PC-9 (cell line): ENCODE measurements at regions of chr12 and their contacts with region 1.

Region 1: GRCh38 chr12:85468356-85469157 is 188.5 kb downstream of the ALX1 start:
- DNase-seq: peak; percentile 52 to 68
- H3K4me3 ChIP-seq: peak overlapping the region; percentile 43; the same call in 1 of the 2 replicates
- H3K27ac ChIP-seq: 0 out of 2 replicates have a peak overlapping the region, but pooled peaks have one; percentile 1
- H3K4me1 ChIP-seq: peaks cover 27% of the 10 kb centered on the region
- H3K27me3 ChIP-seq: no peaks in the 10 kb centered on the region
- CTCF ChIP-seq: peak; percentile 87

Region 2: DNA sequence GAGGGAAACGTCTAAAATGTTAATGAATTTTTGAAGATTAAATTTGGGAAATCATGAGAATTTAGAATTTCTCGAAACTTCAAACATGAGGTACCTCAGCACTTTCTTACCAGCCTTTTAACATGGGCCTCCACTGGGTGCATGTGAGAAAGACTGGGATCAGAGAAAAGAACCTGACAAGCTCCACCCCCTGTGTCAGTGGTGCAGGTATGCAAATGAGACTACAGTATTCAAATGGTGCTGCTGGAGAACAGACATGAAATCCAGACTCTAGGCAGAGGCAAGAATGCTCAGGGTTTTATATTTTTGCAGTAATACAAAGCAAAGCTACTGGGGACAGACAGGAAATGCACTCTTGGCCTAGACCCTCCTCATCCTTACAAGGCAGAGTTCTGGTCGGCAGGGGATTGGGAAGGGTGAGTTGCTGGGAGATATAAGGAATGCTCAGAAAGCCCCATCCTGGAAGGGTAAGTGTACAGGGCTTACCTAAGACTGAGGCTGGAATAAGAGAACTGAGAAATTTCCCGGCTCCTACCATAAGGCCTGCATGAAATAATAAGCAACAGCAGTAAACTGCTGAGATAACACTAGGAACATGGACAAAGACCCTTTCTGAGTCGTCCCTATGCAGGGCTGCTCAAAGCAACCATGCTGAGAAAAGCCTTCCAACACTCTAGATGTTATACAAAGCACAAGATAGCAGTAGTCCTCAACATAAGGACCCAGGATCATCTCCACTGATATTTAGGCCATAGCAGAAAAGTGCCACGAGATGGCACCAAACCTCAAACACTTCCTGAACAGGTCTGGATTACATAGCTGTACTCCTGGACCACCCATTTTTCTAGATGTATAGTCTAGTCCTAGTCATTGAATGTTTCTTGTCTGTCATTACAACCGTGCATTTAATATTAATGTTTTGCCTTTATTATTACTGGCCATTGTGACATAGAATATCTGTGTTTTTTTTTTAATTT is 106.9 kb after region 1 on chr12:
- CTCF ChIA-PET with region 1: no interaction called
- POLR2A ChIA-PET with region 1: no interaction called
- intact Hi-C with region 1: loop called (anchors 5 kb)
- DNase-seq: peak; percentile 33 to 40
- H3K4me3 ChIP-seq: no peak overlapping the region
- H3K27ac ChIP-seq: no peak overlapping the region
- H3K4me1 ChIP-seq: no peaks in the 10 kb centered on the region
- H3K27me3 ChIP-seq: no peaks in the 10 kb centered on the region
- CTCF ChIP-seq: peak; percentile 74

Region 3: DNA sequence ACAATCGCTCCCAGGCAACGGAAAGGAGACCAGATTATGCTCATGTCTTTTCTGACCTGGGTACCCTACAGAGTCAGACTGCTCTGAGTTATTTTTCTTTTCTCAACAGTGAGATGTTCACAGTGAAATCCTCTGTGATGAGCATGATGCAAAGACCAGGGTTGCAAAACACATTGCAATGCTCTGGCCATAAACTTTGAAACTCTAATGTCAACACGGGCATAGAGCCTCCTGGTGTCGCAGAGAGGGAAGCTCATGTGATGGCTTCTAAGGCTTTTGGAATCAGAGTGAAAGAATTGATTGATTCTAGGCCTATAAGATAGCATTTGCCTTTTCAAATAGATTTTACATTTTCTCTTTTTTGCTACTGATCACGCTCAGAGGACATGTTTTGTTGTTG is 174.3 kb after region 1 on chr12:
- CTCF ChIA-PET with region 1: no interaction called
- POLR2A ChIA-PET with region 1: no interaction called
- intact Hi-C with region 1: no loop called
- DNase-seq: no peak
- H3K4me3 ChIP-seq: no peak overlapping the region
- H3K27ac ChIP-seq: no peak overlapping the region
- H3K4me1 ChIP-seq: 0 out of 2 replicates have a peak, but pooled peaks cover 4% of the 10 kb centered on the region
- H3K27me3 ChIP-seq: no peaks in the 10 kb centered on the region
- CTCF ChIP-seq: no peak

Region 4: GRCh38 chr12:85920324-85920947 is 451.9 kb after region 1 on chr12:
- CTCF ChIA-PET with region 1: interaction called, 3 read pairs
- POLR2A ChIA-PET with region 1: no interaction called
- intact Hi-C with region 1: loop called (anchors 2 kb)
- DNase-seq: no peak
- H3K4me3 ChIP-seq: no peak overlapping the region
- H3K27ac ChIP-seq: no peak overlapping the region
- H3K4me1 ChIP-seq: no peaks in the 10 kb centered on the region
- H3K27me3 ChIP-seq: no peaks in the 10 kb centered on the region
- CTCF ChIP-seq: peak; percentile 77